ENCODE measurements at regions of chrX and their contacts with region 1.

Region 1: DNA sequence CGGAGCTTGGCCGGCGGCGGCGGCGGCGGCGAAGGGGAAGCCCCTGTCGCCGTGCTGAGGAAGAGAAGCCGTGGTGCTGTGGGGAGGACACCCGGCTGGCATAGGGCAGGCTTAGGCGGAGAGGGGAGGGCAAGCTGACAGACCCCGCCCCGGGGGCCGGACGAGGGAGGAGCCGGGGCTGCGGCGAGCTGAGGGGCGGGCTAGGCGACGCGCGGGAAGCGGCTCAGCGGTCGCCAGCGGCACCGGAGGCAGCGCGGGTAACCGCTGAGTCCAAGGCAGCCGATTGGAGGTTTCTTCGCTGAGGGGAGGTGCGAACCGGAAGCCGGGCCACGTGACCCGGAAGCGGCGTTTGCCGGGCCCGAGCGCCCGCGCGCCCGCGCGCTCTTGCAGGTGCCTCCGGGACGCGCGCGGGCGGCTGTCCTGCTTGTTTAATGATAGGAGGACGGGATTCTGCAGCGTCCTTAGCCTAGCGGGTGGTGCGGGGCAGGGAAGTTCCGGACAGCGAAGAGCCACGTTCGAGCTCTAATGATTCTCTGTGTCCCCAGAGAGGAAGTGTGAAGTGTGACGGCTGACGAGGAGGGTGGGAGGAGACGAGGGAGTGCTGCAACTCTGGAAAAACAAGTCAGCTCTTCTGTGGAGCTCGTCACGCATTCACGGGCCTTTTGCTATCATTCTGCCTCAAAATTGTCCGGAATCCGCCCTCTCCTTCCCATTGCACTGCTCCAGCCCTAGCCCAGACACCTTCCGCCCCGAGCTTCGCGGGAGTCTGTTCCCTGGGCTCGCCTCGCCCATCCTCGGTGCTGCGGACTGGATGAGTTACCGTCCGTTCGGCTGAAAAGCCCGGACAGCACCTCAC is at the start of gene AP1S2:
- DNase-seq: peak; percentile 91
- ATAC-seq: peak; percentile 98
- H3K4me3 Mint-ChIP-seq: peak within 1 kb of the TSS; percentile 85
- H3K27ac Mint-ChIP-seq: peak within 1 kb of the TSS; percentile 96
- H3K4me1 Mint-ChIP-seq: peaks cover 23% of the 10 kb centered on the region
- H3K27me3 Mint-ChIP-seq: peaks cover 2% of the 10 kb centered on the region
- total RNA-seq, gene AP1S2: 33.9 to 35.9 TPM

Region 2: DNA sequence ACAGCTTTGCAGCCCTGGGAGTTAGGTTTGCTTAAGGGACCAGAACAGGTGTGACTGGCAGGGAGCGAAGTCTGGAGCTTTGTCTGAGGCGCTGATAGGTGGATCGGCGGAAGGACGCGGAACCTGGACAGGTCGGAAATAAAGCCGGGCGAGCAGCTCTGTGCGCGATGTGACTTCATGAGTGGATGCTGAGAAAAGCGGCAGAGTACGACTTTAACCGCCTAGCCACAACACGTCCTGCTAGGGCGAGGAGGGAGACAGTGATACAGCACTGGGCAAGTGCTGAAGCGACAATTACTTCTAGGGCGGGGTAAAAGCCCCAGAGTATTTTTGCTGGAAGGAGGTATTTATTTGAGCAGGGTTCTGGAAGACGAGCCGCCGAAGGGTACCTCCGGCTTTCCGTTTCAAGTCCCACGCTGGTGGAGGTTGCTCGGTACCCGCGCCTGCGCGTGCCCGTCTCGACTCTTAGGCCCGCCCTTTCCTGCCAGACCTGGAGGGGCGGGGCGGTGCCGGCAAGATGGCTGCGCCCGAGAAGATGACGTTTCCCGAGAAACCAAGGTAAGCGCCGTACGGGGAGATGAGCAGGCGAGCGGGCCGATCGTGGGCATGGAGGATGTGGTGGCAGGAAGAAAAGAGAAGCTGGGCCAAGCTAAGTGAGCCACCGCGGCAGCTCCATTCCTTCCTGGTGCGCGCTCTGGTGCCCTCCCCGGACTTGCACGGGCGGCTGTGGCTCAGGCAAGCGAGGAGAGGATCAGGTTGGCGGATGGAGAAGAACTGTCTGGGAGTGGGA is 64.8 kb before region 1 on chrX and contains the start of gene ZRSR2:
- CTCF ChIA-PET with region 1: no interaction called
- POLR2A ChIA-PET with region 1: interaction called, 27 read pairs
- DNase-seq: peak; percentile 90
- ATAC-seq: peak; percentile 88
- H3K4me3 Mint-ChIP-seq: no peak within 1 kb of the TSS
- H3K27ac Mint-ChIP-seq: no peak within 1 kb of the TSS
- H3K4me1 Mint-ChIP-seq: peaks cover 21% of the 10 kb centered on the region
- H3K27me3 Mint-ChIP-seq: no peaks in the 10 kb centered on the region
- total RNA-seq, gene ZRSR2: 15.9 to 16.0 TPM

Region 3: DNA sequence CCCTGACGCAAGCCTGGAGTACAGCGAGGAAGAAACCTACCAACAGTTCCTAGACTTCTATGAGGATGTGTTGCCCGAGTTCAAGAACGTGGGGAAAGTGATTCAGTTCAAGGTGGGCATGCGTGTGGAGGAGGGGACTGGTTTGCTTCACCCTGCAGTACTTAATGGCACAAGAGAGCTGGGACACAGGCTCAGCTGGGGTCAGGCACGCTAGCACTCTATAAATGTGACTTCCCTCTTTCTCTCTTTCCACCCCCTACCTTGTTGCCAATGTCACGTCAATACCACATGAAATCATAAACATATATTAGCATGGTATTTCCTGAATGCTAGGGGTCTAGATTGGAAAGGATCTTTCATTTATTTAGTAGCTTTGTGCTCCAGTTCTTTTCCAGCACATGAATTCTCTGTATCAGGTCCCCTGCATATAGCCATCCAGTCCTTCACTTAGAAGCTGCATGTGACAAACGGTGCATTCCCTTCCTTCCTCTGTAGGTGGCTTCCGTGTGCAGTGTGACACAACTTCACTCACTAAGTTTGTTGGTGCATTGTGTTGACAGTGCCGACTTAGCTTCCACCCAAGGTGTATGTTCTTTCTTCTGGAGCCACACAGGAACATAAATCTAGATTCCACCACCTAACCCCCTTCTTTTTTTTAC is 39.0 kb before region 1 on chrX:
- CTCF ChIA-PET with region 1: interaction called, 10 read pairs
- POLR2A ChIA-PET with region 1: interaction called, 7 read pairs
- DNase-seq: peak; percentile 45
- ATAC-seq: peak; percentile 64
- H3K4me3 Mint-ChIP-seq: no peak overlapping the region
- H3K27ac Mint-ChIP-seq: peak overlapping the region; percentile 57
- H3K4me1 Mint-ChIP-seq: peaks cover 60% of the 10 kb centered on the region
- H3K27me3 Mint-ChIP-seq: no peaks in the 10 kb centered on the region

Region 4: GRCh38 chrX:15838017-15838416 is 16.9 kb before region 1 on chrX:
- CTCF ChIA-PET with region 1: no interaction called
- POLR2A ChIA-PET with region 1: no interaction called
- DNase-seq: peak; percentile 24
- ATAC-seq: peak; percentile 55
- H3K4me3 Mint-ChIP-seq: no peak overlapping the region
- H3K27ac Mint-ChIP-seq: no peak overlapping the region
- H3K4me1 Mint-ChIP-seq: no peaks in the 10 kb centered on the region
- H3K27me3 Mint-ChIP-seq: no peaks in the 10 kb centered on the region

Measured in activated CD8-positive, alpha-beta T cell treated with anti-CD3 and anti-CD28 coated beads, Interleukin-2, amount 10 ng/mL, durations not matched to agents 7 days and 5 days (primary cell).